ENCODE measurements at regions of chr14 and their contacts with region 1.

Region 1: DNA sequence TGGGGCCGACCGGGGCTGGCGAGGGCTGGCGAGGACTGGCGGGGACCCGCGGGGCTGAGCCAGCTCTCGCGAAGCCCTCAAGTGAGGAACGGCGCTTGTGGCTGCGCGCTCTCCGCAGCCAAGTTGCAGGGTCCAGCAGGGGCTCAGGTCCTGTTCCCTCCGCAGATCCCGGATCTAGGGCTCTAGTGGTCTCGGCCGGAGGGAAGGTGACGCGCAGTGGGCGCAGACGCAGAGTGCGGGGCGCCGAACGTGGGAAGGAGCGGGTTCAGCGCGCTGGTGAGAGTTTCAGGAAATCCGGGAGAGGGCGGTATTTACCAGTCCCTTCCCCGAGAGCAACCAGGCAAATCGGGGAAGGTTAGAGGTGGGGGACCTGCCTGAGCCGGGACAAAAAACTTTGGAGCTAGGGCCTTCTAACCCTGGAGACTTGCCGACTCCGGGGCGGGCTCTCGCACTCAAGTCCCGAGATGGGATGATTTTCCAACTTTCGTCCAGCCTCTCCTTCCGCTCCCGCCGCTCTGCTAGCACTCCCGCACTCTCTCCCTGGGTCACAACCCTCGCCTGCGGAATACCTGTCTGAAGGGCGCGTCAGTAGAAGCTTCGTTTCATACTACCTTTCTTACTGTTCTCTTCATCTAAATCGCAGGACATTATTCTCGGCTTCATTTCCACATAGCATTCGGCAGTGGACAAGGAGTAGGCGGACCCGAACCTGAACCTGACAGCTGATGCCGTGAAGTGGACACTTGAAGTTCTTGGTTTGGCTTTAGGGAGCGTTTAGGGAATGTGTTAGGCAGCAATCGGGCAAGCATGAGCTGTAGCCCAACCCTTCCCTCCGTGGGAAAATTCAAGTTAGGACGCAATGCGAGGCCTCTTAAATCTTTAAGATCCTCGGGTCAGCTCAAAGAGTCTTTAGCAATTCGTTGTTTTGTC is 13.6 kb upstream of the PAX9 start:
- ATAC-seq: peak; percentile 82 to 89 (median 85)
- H3K4me3 ChIP-seq: peak overlapping the region; percentile 26 to 52 (median 40)
- H3K27ac ChIP-seq: no peak overlapping the region
- H3K4me1 ChIP-seq: no peaks in the 10 kb centered on the region

Region 2: GRCh38 chr14:35979531-35979930 is 668.6 kb before region 1 on chr14:
- in situ Hi-C with region 1: no loop called
- ATAC-seq: no peak
- H3K4me3 ChIP-seq: no peak overlapping the region
- H3K27ac ChIP-seq: no peak overlapping the region
- H3K4me1 ChIP-seq: peaks cover 0 to 9% of the 10 kb centered on the region in 2 donors

Region 3: GRCh38 chr14:36373982-36374673 is 274.0 kb before region 1 on chr14:
- in situ Hi-C with region 1: no loop called
- ATAC-seq: peak; percentile 67 to 100 (median 83)
- H3K4me3 ChIP-seq: no peak overlapping the region
- H3K27ac ChIP-seq: no peak overlapping the region
- H3K4me1 ChIP-seq: no peaks in the 10 kb centered on the region

Region 4: GRCh38 chr14:36936013-36936678 is 288.1 kb after region 1 on chr14:
- in situ Hi-C with region 1: loop called in 5 of 9 experiments (anchors 10 to 25 kb)
- ATAC-seq: peak in 3 of 8 experiments; percentile 63 to 96 (median 95)
- H3K4me3 ChIP-seq: no peak overlapping the region
- H3K27ac ChIP-seq: no peak overlapping the region
- H3K4me1 ChIP-seq: no peaks in the 10 kb centered on the region

Region 5: DNA sequence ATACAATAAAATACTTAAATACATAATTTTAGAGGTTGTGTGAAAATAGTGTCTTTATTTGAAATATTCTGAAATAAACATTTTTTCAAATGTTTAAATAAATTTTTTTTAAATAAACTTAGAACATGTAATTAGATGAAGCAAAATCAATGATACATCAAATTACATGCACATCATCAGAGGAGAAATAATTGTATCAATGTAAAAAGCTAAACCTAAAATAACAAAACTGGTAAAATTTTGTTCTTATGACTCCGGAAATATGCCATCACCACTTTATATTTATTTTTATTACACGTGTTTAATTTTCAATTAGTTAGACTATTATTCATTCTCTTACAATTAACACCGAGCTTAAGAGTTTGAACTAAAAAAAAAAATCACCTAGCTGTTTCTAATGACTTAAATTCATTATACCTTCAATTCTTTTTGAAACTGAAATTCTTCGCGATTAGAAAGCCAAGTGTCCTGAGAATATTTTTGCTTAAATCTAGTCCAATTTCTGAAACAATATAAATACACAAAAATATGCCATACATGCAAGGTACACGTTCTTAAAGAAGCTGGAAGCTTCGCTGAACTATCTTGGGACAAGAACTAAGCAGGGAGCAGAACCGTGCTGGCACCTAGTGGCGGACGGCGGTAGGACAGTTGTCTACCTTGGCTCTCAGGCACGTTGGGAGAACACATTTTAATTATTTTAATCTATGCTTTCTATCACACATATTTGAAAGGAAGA is 293.9 kb after region 1 on chr14:
- in situ Hi-C with region 1: loop called in 5 of 9 experiments (anchors 10 to 25 kb)
- ATAC-seq: peak in 7 of 8 experiments; percentile 11 to 84 (median 50)
- H3K4me3 ChIP-seq: no peak overlapping the region
- H3K27ac ChIP-seq: no peak overlapping the region
- H3K4me1 ChIP-seq: no peaks in the 10 kb centered on the region

Region 6: DNA sequence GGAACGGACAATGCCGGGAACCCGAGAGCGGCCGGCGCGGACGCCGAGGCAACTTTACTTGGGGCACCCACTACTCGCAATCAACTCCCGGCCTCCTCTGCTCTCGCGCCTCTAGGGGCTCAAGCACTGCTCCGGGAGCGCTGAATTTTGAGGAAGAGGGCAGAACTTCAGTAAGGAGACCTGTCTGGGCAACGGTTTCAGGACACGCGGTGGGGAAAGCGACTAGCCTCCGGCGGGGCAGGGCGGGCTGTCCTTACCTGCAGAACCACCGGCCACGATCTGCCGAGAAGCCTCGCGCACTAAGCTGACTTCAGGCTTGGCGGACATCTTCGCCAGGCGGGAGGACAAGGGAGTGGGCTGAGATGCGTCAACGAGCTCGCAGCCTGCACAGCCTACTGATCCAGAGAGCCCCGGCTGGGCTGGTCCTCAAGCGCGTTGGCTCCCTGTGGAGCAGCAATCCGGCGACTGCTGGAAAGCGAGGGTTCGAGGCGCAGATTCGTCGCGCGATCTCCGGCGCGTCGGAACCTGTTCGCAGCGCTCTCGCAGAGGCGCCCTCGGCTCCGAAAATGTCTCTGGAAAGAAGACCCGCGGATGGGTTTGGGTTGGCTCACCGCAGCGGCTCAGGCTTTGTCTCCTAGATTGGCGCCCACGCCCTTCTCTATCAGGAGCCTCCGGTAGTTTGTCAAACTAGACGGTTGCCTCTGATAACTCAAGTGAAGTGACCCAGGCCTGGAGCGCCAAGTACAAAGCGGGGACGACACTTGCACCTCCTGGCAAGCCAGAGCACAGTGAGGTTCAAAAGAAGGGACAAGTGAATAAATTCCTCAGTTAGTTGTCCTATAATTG is 524.2 kb after region 1 on chr14 and contains the start of gene SLC25A21:
- in situ Hi-C with region 1: loop called in 1 of 9 experiments (anchors 25 kb)
- ATAC-seq: peak; percentile 91 to 96 (median 94)
- H3K4me3 ChIP-seq: peak within 1 kb of the TSS; percentile 59 to 97 (median 68)
- H3K27ac ChIP-seq: peak within 1 kb of the TSS; percentile 67 to 83
- H3K4me1 ChIP-seq: peaks cover 2 to 17% of the 10 kb centered on the region in 2 donors
- total RNA-seq, gene SLC25A21: 0.52 to 2.9 (median 1.4) TPM

Measured in motor neuron (in vitro differentiated cells).